IMR-90 (cell line): ENCODE measurements at regions of chr6 and their contacts with region 1.

Region 1: DNA sequence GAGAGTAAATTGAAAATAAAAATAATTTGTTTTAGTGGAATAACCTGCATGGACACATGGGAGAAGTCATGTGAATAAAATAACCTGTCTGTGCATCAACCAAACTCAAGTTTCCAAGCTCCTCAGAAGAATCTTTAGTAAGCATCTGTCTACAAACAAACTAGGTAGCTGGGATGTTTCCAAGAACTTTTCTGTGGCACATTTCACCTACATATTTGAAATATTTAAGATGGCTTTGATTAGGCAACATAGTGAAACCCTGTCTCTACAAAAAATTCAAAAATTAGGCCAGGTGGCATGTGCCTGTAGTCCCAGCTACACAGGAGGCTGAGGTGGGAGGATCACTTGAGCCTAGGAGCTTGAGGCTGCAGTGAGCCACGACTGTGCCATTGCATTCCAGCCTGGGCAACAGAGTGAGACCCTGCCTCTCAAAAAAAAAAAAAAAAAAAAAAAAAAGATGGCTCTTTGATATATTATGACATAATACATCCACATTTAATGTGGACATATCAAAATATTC is 168.1 kb downstream of the DST start:
- DNase-seq: no peak
- ATAC-seq: no peak
- H3K4me3 ChIP-seq: no peak overlapping the region
- H3K27ac ChIP-seq: no peak overlapping the region
- H3K4me1 ChIP-seq: 0 out of 2 replicates have a peak, but pooled peaks cover 2% of the 10 kb centered on the region
- H3K27me3 ChIP-seq: no peaks in the 10 kb centered on the region
- CTCF ChIP-seq: no peak
- POLR2A ChIP-seq: no peak
- RAD21 ChIP-seq: no peak

Region 2: DNA sequence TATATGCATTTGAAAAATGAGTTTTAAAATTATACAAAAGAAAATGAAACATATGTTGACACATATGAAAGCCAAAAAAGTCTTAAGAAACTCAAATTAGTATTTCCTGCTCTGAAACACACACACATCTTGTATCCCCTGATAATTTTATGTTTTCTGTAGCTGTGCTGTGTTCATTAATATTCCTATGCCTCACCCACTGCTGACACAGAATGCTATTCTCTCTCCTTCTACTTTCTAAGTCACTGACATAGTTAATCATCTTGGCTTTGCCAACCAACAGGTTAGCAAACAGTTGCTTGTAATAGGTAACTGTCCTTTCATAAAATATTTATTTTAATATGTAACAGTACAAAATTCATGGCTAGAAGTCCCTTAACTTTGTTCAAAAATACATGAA is 27.4 kb after region 1 on chr6:
- CTCF ChIA-PET with region 1: interaction called, 5 read pairs
- POLR2A ChIA-PET with region 1: no interaction called
- dilution Hi-C with region 1: no loop called
- in situ Hi-C with region 1: no loop called
- intact Hi-C with region 1: loop called (anchors 5 kb)
- DNase-seq: no peak
- ATAC-seq: no peak
- H3K4me3 ChIP-seq: no peak overlapping the region
- H3K27ac ChIP-seq: no peak overlapping the region
- H3K4me1 ChIP-seq: peaks cover 2% of the 10 kb centered on the region
- H3K27me3 ChIP-seq: no peaks in the 10 kb centered on the region
- CTCF ChIP-seq: no peak
- POLR2A ChIP-seq: no peak
- RAD21 ChIP-seq: no peak

Region 3: GRCh38 chr6:56517155-56517745 is 42.7 kb after region 1 on chr6:
- CTCF ChIA-PET with region 1: no interaction called
- POLR2A ChIA-PET with region 1: no interaction called
- dilution Hi-C with region 1: no loop called
- in situ Hi-C with region 1: no loop called
- intact Hi-C with region 1: no loop called
- DNase-seq: peak; percentile 84
- ATAC-seq: no peak; the same call in 1 of the 2 replicates
- H3K4me3 ChIP-seq: no peak overlapping the region
- H3K27ac ChIP-seq: no peak overlapping the region; the same call in 1 of the 2 replicates
- H3K4me1 ChIP-seq: peaks cover 14% of the 10 kb centered on the region
- H3K27me3 ChIP-seq: no peaks in the 10 kb centered on the region
- CTCF ChIP-seq: no peak
- POLR2A ChIP-seq: no peak
- RAD21 ChIP-seq: no peak